ENCODE measurements at regions of chr11 and their contacts with region 1.

Region 1: GRCh38 chr11:111230122-111230465 is 15.4 kb upstream of the POU2AF2 start:
- DNase-seq: no peak
- ATAC-seq: peak; percentile 62
- H3K4me3 ChIP-seq: no peak overlapping the region
- H3K27ac ChIP-seq: no peak overlapping the region
- H3K4me1 ChIP-seq: peaks cover 10% of the 10 kb centered on the region
- H3K27me3 ChIP-seq: peaks cover 0 to 3% of the 10 kb centered on the region in 2 experiments; a peak in 1 of 4 replicates
- CTCF ChIP-seq: no peak
- EP300 ChIP-seq: no peak
- POLR2A ChIP-seq: no peak
- RAD21 ChIP-seq: no peak

Region 2: DNA sequence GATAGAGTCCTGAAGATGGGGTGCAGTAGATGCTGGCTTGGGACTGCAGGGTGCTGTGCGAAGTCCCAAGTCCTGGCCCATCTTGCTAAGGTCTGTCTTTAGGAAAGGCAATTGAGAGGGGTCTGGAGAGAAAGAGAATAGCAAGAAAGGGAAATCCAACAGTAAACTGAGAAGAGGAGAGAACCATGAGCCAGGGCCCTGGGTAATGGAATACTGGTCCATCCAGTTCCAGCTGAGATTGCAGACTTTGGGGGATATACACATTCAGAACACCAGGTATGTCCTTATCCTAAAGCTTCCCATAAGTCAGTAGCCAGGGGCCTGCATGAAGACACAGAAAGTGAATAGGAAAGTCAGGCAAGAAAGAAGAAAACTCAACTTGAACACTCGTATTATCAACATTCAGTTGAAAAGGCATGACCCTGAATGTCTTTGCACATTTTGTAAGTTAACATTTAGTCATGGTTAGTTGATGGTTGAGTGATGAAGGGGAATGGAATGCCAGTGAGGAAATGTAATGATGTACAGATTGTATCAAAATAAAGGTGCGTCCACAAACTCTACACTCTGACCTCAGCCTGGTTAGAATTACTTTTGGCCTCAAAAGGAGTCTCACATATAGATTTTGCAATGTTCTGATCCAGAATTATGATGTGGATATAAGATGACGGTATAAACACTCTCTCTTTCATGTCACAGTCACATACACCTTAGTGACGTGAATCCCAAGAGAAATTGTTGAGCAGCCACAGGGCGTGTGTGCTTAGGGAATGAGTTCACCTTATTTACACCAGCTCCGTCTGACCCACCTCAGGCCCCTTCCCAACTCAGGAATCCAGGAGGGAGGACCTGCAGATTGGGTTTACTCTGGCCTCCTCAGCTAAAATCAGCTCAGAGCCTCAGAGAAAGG is 1034.0 kb before region 1 on chr11:
- CTCF ChIA-PET with region 1: interaction called, 7 read pairs
- POLR2A ChIA-PET with region 1: no interaction called
- RAD21 ChIA-PET with region 1: interaction called, 6 read pairs
- SMC1A ChIA-PET with region 1: interaction called, 4 read pairs
- in situ Hi-C with region 1: loop called (anchors 5 kb)
- intact Hi-C with region 1: no loop called
- DNase-seq: no peak
- ATAC-seq: no peak
- H3K4me3 ChIP-seq: no peak overlapping the region
- H3K27ac ChIP-seq: no peak overlapping the region
- H3K4me1 ChIP-seq: peaks cover 4% of the 10 kb centered on the region; the same call in 1 of the 2 replicates
- H3K27me3 ChIP-seq: no peaks in the 10 kb centered on the region
- CTCF ChIP-seq: no peak
- EP300 ChIP-seq: no peak
- POLR2A ChIP-seq: no peak
- RAD21 ChIP-seq: no peak

Region 3: DNA sequence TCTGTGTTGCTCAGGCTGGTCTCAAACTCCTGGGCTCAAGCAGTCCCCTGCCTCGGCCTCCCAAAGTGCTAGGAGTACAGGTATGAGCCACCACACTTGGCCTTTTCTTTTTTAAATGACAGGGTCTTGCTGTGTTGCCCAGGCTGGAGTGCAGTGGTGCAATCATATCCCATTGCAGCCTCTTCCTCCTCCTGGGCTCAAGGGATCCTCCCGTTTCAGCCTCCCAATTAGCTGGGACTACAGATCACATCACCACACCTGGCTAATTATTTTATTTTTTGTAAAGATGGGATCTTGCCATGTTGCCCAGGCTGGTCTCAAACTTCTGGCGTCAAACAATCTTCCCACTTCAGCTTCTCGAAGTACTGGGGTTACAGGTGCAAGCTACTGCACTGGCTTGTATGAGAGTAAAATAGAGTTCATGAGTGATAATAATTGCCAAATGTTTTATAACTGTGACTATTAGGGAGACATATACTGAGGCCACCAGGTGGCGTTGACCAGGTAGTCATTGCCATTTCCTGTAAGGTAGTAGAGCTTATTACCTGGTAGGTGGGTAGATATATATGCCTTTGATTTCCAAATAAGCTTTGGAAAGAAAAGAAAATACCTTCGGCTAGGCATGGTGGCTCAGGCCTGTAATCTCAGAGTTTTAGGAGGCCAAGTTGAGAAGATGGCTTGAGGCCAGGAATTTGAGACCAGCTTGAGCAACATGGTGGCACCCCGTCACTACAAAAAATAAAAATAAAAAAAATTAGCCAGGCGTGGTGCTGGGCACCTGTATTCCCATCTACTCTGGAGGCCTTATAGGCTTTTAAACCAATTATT is 794.9 kb before region 1 on chr11:
- CTCF ChIA-PET with region 1: interaction called, 61 read pairs
- POLR2A ChIA-PET with region 1: no interaction called
- RAD21 ChIA-PET with region 1: interaction called, 7 read pairs
- SMC1A ChIA-PET with region 1: interaction called, 18 read pairs
- in situ Hi-C with region 1: no loop called
- intact Hi-C with region 1: no loop called
- DNase-seq: no peak
- ATAC-seq: peak; percentile 43
- H3K4me3 ChIP-seq: no peak overlapping the region
- H3K27ac ChIP-seq: no peak overlapping the region
- H3K4me1 ChIP-seq: peaks cover 15% of the 10 kb centered on the region
- H3K27me3 ChIP-seq: no peaks in the 10 kb centered on the region
- CTCF ChIP-seq: peak; percentile 38 to 44 (median 43); a peak in 5 of 6 replicates
- EP300 ChIP-seq: no peak
- POLR2A ChIP-seq: no peak
- RAD21 ChIP-seq: no peak

Region 4: GRCh38 chr11:110463153-110463552 is 766.9 kb before region 1 on chr11:
- CTCF ChIA-PET with region 1: interaction called, 17 read pairs
- POLR2A ChIA-PET with region 1: interaction called, 3 read pairs
- RAD21 ChIA-PET with region 1: interaction called, 4 read pairs
- SMC1A ChIA-PET with region 1: interaction called, 11 read pairs
- in situ Hi-C with region 1: no loop called
- intact Hi-C with region 1: loop called (anchors 5 kb)
- DNase-seq: no peak
- ATAC-seq: peak; percentile 79
- H3K4me3 ChIP-seq: no peak overlapping the region
- H3K27ac ChIP-seq: no peak overlapping the region
- H3K4me1 ChIP-seq: no peaks in the 10 kb centered on the region
- H3K27me3 ChIP-seq: no peaks in the 10 kb centered on the region
- CTCF ChIP-seq: peak; percentile 29 to 43 (median 42); a peak in 5 of 6 replicates
- EP300 ChIP-seq: no peak
- POLR2A ChIP-seq: no peak
- RAD21 ChIP-seq: peak; percentile 54

Region 5: GRCh38 chr11:110809417-110810199 is 420.5 kb before region 1 on chr11:
- CTCF ChIA-PET with region 1: no interaction called
- POLR2A ChIA-PET with region 1: no interaction called
- RAD21 ChIA-PET with region 1: no interaction called
- SMC1A ChIA-PET with region 1: no interaction called
- in situ Hi-C with region 1: no loop called
- intact Hi-C with region 1: no loop called
- DNase-seq: no peak
- ATAC-seq: no peak
- H3K4me3 ChIP-seq: no peak overlapping the region
- H3K27ac ChIP-seq: no peak overlapping the region
- H3K4me1 ChIP-seq: no peaks in the 10 kb centered on the region
- H3K27me3 ChIP-seq: no peaks in the 10 kb centered on the region
- CTCF ChIP-seq: no peak
- EP300 ChIP-seq: no peak
- POLR2A ChIP-seq: no peak
- RAD21 ChIP-seq: no peak

Region 6: DNA sequence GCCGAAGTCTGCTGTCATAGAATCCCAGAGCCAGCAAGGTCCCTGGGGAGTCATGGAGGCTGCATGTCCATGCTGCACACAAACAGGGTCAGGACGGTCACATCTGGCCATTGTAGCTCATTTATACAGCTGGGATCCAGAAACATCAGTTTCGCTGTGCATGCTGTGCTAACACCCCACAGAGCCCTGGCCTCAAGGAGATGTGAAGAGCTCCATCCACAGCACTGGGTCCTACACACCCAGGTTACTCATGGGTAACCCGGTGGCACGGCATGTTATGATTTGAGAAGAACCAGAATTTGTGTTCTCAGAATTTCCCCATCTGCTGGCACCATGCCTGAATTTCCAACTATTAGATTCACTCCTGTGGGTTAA is 371.6 kb before region 1 on chr11:
- CTCF ChIA-PET with region 1: no interaction called
- POLR2A ChIA-PET with region 1: no interaction called
- RAD21 ChIA-PET with region 1: no interaction called
- SMC1A ChIA-PET with region 1: no interaction called
- in situ Hi-C with region 1: no loop called
- intact Hi-C with region 1: loop called (anchors 5 kb)
- DNase-seq: no peak
- ATAC-seq: peak; percentile 59
- H3K4me3 ChIP-seq: no peak overlapping the region
- H3K27ac ChIP-seq: no peak overlapping the region
- H3K4me1 ChIP-seq: peaks cover 10% of the 10 kb centered on the region
- H3K27me3 ChIP-seq: no peaks in the 10 kb centered on the region
- CTCF ChIP-seq: no peak
- EP300 ChIP-seq: no peak
- POLR2A ChIP-seq: no peak
- RAD21 ChIP-seq: no peak

Region 7: DNA sequence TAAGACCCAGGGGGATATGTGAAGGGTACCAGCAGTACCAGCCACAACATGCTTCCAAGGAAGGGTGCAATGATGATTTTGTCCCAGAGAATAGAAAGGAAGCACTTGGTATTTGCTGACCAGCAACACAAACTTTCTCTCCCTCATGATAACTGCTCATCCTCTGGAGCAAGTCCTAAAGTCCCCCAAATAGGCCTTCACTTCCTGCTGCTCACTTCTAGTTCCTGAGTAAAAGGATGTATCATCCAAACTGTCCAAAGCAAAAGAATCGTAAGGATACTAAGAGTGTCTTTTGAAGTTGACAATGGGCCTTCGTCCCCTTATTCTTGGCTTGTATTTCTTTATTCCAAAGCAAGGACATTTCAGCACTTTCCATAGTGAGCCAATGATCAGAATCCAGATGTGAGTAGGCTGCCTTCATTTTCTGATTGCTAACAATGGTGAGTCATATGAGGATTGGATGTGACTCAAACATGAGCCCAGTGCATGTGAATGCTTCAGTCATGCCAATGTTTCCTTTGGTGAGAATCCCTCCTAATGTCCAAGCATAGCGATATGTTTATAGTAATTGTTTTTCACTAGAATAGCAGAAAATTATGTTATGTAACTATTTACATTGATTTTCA is 228.0 kb before region 1 on chr11:
- CTCF ChIA-PET with region 1: no interaction called
- POLR2A ChIA-PET with region 1: no interaction called
- RAD21 ChIA-PET with region 1: no interaction called
- SMC1A ChIA-PET with region 1: no interaction called
- in situ Hi-C with region 1: no loop called
- intact Hi-C with region 1: loop called (anchors 10 kb)
- DNase-seq: no peak
- ATAC-seq: no peak
- H3K4me3 ChIP-seq: no peak overlapping the region
- H3K27ac ChIP-seq: no peak overlapping the region
- H3K4me1 ChIP-seq: peaks cover 12% of the 10 kb centered on the region
- H3K27me3 ChIP-seq: no peaks in the 10 kb centered on the region; a peak in 1 of 4 replicates
- CTCF ChIP-seq: no peak
- EP300 ChIP-seq: no peak
- POLR2A ChIP-seq: no peak
- RAD21 ChIP-seq: no peak

Region 8: GRCh38 chr11:111098091-111098490 is 132.0 kb before region 1 on chr11:
- CTCF ChIA-PET with region 1: no interaction called
- POLR2A ChIA-PET with region 1: no interaction called
- RAD21 ChIA-PET with region 1: no interaction called
- SMC1A ChIA-PET with region 1: no interaction called
- in situ Hi-C with region 1: no loop called
- intact Hi-C with region 1: no loop called
- DNase-seq: no peak
- ATAC-seq: peak; percentile 70
- H3K4me3 ChIP-seq: no peak overlapping the region
- H3K27ac ChIP-seq: no peak overlapping the region
- H3K4me1 ChIP-seq: no peaks in the 10 kb centered on the region
- H3K27me3 ChIP-seq: no peaks in the 10 kb centered on the region
- CTCF ChIP-seq: no peak
- EP300 ChIP-seq: no peak
- POLR2A ChIP-seq: no peak
- RAD21 ChIP-seq: no peak